Heart right ventricle (tissue), 16 donors: ENCODE measurements at regions of chr9 and their contacts with region 1.

Region 1: DNA sequence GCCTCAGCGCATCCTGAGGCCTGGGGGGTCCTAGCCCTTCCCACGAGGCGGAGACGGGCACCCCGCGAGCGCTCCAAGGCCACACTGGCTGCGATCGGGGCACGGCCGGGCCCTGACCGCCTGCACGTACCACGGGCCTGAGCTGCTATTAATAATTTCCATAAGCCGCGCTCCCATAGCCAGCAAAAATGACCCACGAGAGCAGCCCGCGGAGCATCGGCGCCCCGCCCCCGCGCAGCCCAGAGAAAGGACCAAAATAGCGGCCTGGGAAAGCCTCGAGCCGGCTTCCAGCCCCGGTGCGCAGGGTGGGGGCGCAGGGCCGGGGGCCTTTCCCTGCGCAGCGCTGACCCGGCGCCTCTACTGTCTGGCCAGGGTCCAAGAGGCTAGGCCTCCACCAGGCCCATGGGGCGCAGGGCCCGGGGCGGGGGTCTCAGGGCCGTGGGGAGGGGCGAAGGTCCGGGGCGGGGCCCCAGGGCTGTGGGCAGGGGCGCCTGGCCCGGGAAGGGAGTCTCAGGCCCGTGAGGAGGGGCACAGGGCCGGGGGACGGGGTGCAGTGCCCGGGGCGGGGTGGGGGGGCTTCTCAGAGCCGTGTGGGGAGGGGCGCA is 54.4 kb downstream of the EXD3 start:
- DNase-seq: peak; percentile 63 to 65
- ATAC-seq: peak; percentile 55 to 86 (median 68)
- H3K4me3 ChIP-seq: no peak overlapping the region
- H3K27ac ChIP-seq: peak overlapping the region in 9 of 10 donors; percentile 15 to 80 (median 61)
- H3K4me1 ChIP-seq: peaks cover 0 to 19% (median 7%) of the 10 kb centered on the region in 9 donors
- H3K27me3 ChIP-seq: no peaks in the 10 kb centered on the region
- CTCF ChIP-seq: no peak

Region 2: DNA sequence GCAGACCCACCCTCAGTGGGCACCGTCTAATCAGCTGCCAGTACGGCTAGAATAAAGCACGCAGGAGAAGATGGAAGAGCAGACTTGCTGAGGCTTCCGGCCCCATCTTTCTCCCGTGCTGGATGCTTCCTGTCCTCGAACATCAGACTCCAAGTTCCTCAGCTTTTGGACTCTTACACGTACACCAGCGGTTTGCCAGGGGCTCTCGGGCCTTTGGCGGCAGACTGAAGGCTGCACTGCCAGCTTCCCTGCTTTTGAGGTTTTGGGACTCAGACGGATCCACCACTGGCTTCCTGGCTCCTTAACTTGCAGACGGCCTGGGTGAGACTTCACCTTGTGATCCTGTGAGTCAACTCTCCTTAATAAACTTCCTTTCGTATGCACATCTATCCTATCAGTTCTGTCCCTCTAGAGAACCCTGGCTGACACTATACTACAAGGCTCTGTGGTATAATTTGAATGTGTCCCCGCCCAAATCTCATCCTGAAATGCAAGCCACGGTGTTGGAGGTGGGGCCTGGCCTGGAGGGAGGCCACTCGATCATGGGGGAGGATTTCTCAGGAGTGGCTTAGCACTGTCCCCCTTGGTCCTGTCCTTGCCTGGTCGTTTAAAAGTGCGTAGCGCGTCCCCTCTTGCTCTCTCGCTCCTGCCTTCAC is 35.4 kb before region 1 on chr9:
- intact Hi-C with region 1: loop called in 1 of 10 experiments (anchors 5 kb)
- DNase-seq: no peak
- ATAC-seq: no peak
- H3K4me3 ChIP-seq: no peak overlapping the region
- H3K27ac ChIP-seq: no peak overlapping the region
- H3K4me1 ChIP-seq: no peaks in the 10 kb centered on the region
- H3K27me3 ChIP-seq: no peaks in the 10 kb centered on the region
- CTCF ChIP-seq: no peak